ENCODE measurements at regions of chr6 and their contacts with region 1.

Region 1: GRCh38 chr6:117976030-117976651 is 69.1 kb downstream of the SLC35F1 start:
- DNase-seq: no peak
- ATAC-seq: peak; percentile 50
- H3K4me3 ChIP-seq: no peak overlapping the region
- H3K27ac ChIP-seq: no peak overlapping the region
- H3K4me1 ChIP-seq: no peaks in the 10 kb centered on the region
- H3K27me3 ChIP-seq: peaks cover 3% of the 10 kb centered on the region
- CTCF ChIP-seq: peak; percentile 60

Region 2: DNA sequence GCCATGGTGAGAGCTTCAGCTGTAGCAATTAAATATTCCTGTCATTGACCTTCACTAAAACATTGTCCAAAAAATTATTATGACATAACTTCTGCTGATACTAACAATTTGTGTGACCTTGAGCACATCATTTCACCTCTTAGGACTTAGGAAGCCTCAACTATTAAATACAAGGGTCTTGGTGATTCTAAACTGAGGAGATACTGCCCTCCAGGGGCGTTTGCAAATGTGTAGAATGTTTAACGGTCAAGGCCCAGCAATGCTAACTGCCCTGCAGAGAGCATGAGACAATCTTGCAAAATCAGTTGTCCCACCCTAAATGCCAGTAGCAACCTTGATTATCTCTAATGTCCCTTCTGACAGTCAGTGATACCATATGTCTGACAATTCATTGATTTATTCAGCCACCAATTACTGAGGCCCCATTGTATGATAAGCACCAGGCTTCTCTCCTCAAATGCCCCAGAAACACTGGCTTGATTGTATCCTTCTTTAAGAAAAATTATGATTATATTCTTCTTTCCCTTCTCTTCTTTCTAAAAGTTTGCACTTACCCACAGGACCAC is 287.9 kb after region 1 on chr6:
- intact Hi-C with region 1: loop called (anchors 10 kb)
- DNase-seq: no peak
- ATAC-seq: peak; percentile 41
- H3K4me3 ChIP-seq: no peak overlapping the region
- H3K27ac ChIP-seq: no peak overlapping the region
- H3K4me1 ChIP-seq: no peaks in the 10 kb centered on the region
- H3K27me3 ChIP-seq: no peaks in the 10 kb centered on the region
- CTCF ChIP-seq: peak; percentile 42

Region 3: GRCh38 chr6:118401325-118401975 is 425.3 kb after region 1 on chr6:
- intact Hi-C with region 1: no loop called
- DNase-seq: no peak
- ATAC-seq: no peak
- H3K4me3 ChIP-seq: no peak overlapping the region
- H3K27ac ChIP-seq: no peak overlapping the region
- H3K4me1 ChIP-seq: no peaks in the 10 kb centered on the region
- H3K27me3 ChIP-seq: no peaks in the 10 kb centered on the region
- CTCF ChIP-seq: no peak